HepG2 (cell line): ENCODE measurements at regions of chr5 and their contacts with region 1.

Region 1: DNA sequence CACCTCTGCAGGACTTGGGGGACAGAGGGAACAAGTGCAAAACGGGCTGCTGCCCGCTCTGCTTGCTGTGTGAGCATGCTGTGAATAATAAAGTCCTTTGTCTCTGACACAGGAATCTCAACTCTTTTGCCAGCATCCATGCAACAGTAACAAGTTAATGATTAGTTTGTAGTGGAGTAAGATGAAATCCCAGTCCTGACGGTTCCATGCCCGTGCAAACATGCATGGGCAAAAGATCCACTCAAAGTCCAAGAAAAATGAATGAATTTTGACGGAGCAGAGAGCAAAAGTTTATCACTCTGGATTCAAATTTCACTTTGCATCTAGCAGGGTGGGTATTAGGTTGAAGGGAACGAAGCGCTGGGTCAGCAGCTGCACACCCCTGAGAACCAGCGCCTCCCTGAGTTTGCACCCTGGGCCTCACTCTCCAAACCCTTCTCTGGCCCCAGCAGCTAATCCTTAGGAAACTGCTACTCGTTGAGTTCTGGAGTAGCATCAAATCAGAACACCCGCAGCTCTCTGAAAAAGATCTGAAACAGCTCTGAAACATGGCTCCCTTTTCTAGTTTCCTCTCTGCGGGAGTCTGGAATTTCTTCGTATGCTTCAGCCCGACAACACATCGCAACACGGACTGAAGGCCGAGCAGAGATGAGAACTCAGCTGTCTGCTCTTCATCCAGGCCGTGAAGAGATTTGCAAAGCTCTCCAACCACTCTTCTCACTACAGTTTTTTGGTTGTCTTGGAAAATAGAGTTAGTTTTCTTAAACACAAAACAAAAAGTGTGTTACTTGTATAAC is 45.6 kb upstream of the RUFY1 start:
- DNase-seq: peak; percentile 94
- ATAC-seq: peak; percentile 92
- H3K4me3 ChIP-seq: peak overlapping the region; percentile 43 to 67 (median 54); a peak in 5 of 6 replicates
- H3K27ac ChIP-seq: peak overlapping the region; percentile 96
- H3K4me1 ChIP-seq: peaks cover 26% of the 10 kb centered on the region
- H3K27me3 ChIP-seq: no peaks in the 10 kb centered on the region
- CTCF ChIP-seq: peak; percentile 52
- EP300 ChIP-seq: peak; percentile 22 to 66; a peak in 2 of 4 replicates
- POLR2A ChIP-seq: peak; percentile 23 to 43; a peak in 1 of 4 replicates
- RAD21 ChIP-seq: no peak

Region 2: GRCh38 chr5:179550511-179551230 is 45.9 kb after region 1 on chr5 and contains the start of gene RUFY1:
- CTCF ChIA-PET with region 1: no interaction called
- POLR2A ChIA-PET with region 1: interaction called, 4 read pairs
- in situ Hi-C with region 1: no loop called
- intact Hi-C with region 1: loop called (anchors 2 kb)
- DNase-seq: peak; percentile 47
- ATAC-seq: peak; percentile 75
- H3K4me3 ChIP-seq: peak within 1 kb of the TSS; percentile 72 to 98 (median 94)
- H3K27ac ChIP-seq: peak within 1 kb of the TSS; percentile 93
- H3K4me1 ChIP-seq: peaks cover 52% of the 10 kb centered on the region
- H3K27me3 ChIP-seq: no peaks in the 10 kb centered on the region
- CTCF ChIP-seq: no peak
- EP300 ChIP-seq: no peak
- POLR2A ChIP-seq: peak in 1 of 2 experiments; percentile 80
- RAD21 ChIP-seq: peak; percentile 13
- total RNA-seq, gene RUFY1: 28.6 and 31.9 TPM in 2 replicates

Region 3: GRCh38 chr5:180607851-180608583 is 1103.2 kb after region 1 on chr5:
- CTCF ChIA-PET with region 1: no interaction called
- POLR2A ChIA-PET with region 1: no interaction called
- in situ Hi-C with region 1: no loop called
- intact Hi-C with region 1: no loop called
- DNase-seq: peak; percentile 18
- ATAC-seq: no peak
- H3K4me3 ChIP-seq: no peak overlapping the region
- H3K27ac ChIP-seq: no peak overlapping the region
- H3K4me1 ChIP-seq: no peaks in the 10 kb centered on the region
- H3K27me3 ChIP-seq: peaks cover 11 to 63% of the 10 kb centered on the region in 2 experiments
- CTCF ChIP-seq: no peak
- EP300 ChIP-seq: no peak
- POLR2A ChIP-seq: no peak
- RAD21 ChIP-seq: no peak